Vagina (tissue), 2 donors: ENCODE measurements at regions of chr1 and their contacts with region 1.

Region 1: GRCh38 chr1:155940531-155940992 is 876 bp upstream of the RXFP4 start:
- DNase-seq: no peak
- H3K4me3 ChIP-seq: no peak overlapping the region
- H3K27ac ChIP-seq: no peak overlapping the region
- H3K4me1 ChIP-seq: peaks cover 29% of the 10 kb centered on the region
- H3K27me3 ChIP-seq: no peaks in the 10 kb centered on the region
- CTCF ChIP-seq: no peak
- POLR2A ChIP-seq: no peak

Region 2: GRCh38 chr1:155920717-155921116 is 19.8 kb before region 1 on chr1:
- intact Hi-C with region 1: no loop called
- DNase-seq: no peak
- H3K4me3 ChIP-seq: no peak overlapping the region
- H3K27ac ChIP-seq: no peak overlapping the region
- H3K4me1 ChIP-seq: no peaks in the 10 kb centered on the region
- H3K27me3 ChIP-seq: no peaks in the 10 kb centered on the region
- CTCF ChIP-seq: no peak
- POLR2A ChIP-seq: no peak

Region 3: DNA sequence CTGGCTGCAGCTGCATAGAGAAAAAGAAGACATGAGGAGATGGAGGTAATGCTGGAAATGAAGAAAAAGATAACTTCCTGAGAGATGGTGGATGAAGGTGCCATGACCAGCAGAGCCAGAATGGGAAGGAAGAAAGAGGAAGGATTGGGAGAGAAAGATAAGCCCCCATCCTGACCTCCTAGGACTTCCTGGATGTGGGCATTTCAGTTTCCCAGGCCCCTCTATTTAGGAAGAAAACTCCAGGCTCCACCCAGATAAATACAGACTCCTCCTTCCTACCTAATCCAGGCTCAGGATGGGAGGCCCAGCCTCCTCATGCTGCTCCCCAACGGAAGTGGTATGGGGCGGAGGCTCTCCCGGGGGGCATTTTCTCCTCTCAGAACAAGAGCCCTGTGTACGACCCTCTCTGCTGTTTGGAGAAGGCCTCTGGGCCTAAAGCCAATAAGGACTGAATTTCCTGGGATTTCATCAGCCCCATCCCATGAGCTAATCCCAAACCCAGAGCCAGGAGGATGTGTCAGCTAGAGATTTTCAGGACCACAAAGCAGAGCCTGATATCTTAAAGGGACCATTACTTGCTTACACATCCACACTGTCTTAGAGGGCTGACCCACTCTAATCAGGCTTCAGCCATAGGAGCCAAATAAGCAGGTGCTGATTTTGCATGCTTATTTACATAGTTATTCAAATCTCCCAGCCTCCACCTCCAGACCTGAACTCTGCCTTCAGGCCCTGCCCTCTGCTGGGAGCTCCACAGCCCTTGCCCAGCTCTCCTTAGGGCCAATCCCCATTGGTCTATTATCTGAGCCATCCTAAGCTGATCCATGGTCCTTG is 42.8 kb after region 1 on chr1:
- intact Hi-C with region 1: loop called (anchors 5 kb)
- DNase-seq: no peak
- H3K4me3 ChIP-seq: peak overlapping the region; percentile 32 to 36
- H3K27ac ChIP-seq: peak overlapping the region; percentile 95
- H3K4me1 ChIP-seq: peaks cover 59% of the 10 kb centered on the region
- H3K27me3 ChIP-seq: no peaks in the 10 kb centered on the region
- CTCF ChIP-seq: no peak
- POLR2A ChIP-seq: no peak